ENCODE measurements at regions of chr7 and their contacts with region 1.

Region 1: DNA sequence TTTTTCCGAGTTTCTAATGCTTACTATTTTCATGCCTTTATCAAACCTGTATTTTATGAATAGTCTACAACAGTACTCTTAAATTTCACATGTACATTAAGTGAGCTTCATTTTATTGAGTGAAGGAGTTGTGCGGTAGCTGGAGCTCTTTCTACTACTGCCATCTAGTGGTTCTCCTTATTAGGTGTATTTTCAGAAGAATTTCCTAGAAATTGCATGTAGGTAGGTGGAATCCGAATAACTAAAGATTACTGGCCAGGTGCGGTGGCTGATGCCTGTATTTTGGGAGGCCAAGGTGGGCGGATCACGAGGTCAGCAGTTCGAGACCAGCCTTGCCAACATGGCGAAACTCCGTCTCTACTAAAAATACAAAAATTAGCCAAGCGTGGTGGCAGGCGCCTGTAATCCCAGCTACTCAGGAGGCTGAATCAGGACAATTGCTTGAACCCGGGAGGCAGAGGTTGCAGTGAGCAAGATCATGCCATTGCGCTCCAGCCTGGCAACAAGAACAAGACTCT is 38.3 kb downstream of the LRRC72 start:
- DNase-seq: peak; percentile 8
- ATAC-seq: peak; percentile 80
- H3K4me3 ChIP-seq: no peak overlapping the region
- H3K27ac ChIP-seq: no peak overlapping the region
- H3K4me1 ChIP-seq: no peaks in the 10 kb centered on the region
- H3K27me3 ChIP-seq: no peaks in the 10 kb centered on the region; a peak in 1 of 4 replicates
- CTCF ChIP-seq: peak; percentile 58 to 64 (median 61); a peak in 5 of 6 replicates
- EP300 ChIP-seq: no peak
- POLR2A ChIP-seq: no peak
- RAD21 ChIP-seq: peak; percentile 81

Region 2: DNA sequence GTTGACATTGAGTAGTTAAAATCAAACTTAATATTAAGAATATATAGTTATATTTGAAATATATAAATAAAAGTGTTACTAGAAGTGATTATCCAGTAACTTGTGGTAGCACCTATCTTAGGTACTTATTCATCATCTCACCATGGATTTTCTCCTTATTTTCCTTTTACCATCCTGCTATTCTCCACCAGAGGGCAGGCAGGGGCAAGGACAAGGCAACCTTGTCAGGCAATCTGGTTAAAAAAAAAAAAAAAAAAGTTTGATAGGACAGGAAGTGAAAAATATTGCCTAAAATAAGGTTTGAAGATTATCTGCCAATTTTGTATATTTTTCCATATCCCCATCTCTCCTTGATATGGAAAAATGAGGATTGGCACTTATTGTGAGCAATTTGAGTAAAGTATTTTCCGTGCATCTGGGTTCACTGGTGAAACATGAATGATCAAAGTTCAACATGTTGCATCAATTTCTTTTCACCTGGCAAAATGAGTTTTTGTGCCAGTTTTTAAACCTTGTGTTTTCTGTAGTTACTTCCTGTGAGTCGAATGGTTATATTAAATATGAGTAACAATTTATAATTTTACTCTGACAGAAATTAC is 1259.9 kb before region 1 on chr7:
- CTCF ChIA-PET with region 1: no interaction called
- POLR2A ChIA-PET with region 1: no interaction called
- RAD21 ChIA-PET with region 1: no interaction called
- SMC1A ChIA-PET with region 1: no interaction called
- in situ Hi-C with region 1: loop called (anchors 25 kb)
- intact Hi-C with region 1: no loop called
- DNase-seq: no peak
- ATAC-seq: peak; percentile 68
- H3K4me3 ChIP-seq: no peak overlapping the region
- H3K27ac ChIP-seq: no peak overlapping the region
- H3K4me1 ChIP-seq: no peaks in the 10 kb centered on the region
- H3K27me3 ChIP-seq: no peaks in the 10 kb centered on the region
- CTCF ChIP-seq: peak; percentile 53 to 64 (median 64)
- EP300 ChIP-seq: no peak
- POLR2A ChIP-seq: no peak
- RAD21 ChIP-seq: peak; percentile 59

Region 3: GRCh38 chr7:16078076-16078952 is 486.7 kb before region 1 on chr7:
- CTCF ChIA-PET with region 1: interaction called, 81 read pairs
- POLR2A ChIA-PET with region 1: no interaction called
- RAD21 ChIA-PET with region 1: interaction called, 23 read pairs
- SMC1A ChIA-PET with region 1: interaction called, 22 read pairs
- in situ Hi-C with region 1: loop called (anchors 5 kb)
- intact Hi-C with region 1: loop called (anchors 1 kb)
- DNase-seq: no peak
- ATAC-seq: peak; percentile 75
- H3K4me3 ChIP-seq: no peak overlapping the region
- H3K27ac ChIP-seq: no peak overlapping the region
- H3K4me1 ChIP-seq: no peaks in the 10 kb centered on the region
- H3K27me3 ChIP-seq: no peaks in the 10 kb centered on the region
- CTCF ChIP-seq: peak; percentile 55 to 60 (median 57)
- EP300 ChIP-seq: no peak
- POLR2A ChIP-seq: no peak
- RAD21 ChIP-seq: peak; percentile 65

Region 4: GRCh38 chr7:16431646-16432424 is 133.1 kb before region 1 on chr7:
- CTCF ChIA-PET with region 1: interaction called, 46 read pairs
- POLR2A ChIA-PET with region 1: no interaction called
- RAD21 ChIA-PET with region 1: interaction called, 19 read pairs
- SMC1A ChIA-PET with region 1: interaction called, 12 read pairs
- in situ Hi-C with region 1: no loop called
- intact Hi-C with region 1: loop called (anchors 2 kb)
- DNase-seq: no peak
- ATAC-seq: peak; percentile 74
- H3K4me3 ChIP-seq: no peak overlapping the region
- H3K27ac ChIP-seq: no peak overlapping the region
- H3K4me1 ChIP-seq: no peaks in the 10 kb centered on the region
- H3K27me3 ChIP-seq: no peaks in the 10 kb centered on the region
- CTCF ChIP-seq: peak; percentile 13 to 35 (median 34); a peak in 3 of 6 replicates
- EP300 ChIP-seq: no peak
- POLR2A ChIP-seq: no peak
- RAD21 ChIP-seq: peak; percentile 37; the same call in 1 of the 2 replicates

Region 5: GRCh38 chr7:16479591-16479990 is 85.4 kb before region 1 on chr7:
- CTCF ChIA-PET with region 1: no interaction called
- POLR2A ChIA-PET with region 1: no interaction called
- RAD21 ChIA-PET with region 1: no interaction called
- SMC1A ChIA-PET with region 1: no interaction called
- in situ Hi-C with region 1: no loop called
- intact Hi-C with region 1: no loop called
- DNase-seq: no peak
- ATAC-seq: no peak
- H3K4me3 ChIP-seq: no peak overlapping the region
- H3K27ac ChIP-seq: no peak overlapping the region
- H3K4me1 ChIP-seq: no peaks in the 10 kb centered on the region
- H3K27me3 ChIP-seq: no peaks in the 10 kb centered on the region
- CTCF ChIP-seq: no peak
- EP300 ChIP-seq: no peak
- POLR2A ChIP-seq: no peak
- RAD21 ChIP-seq: no peak

Region 6: GRCh38 chr7:16581286-16581685 is 16.3 kb after region 1 on chr7:
- CTCF ChIA-PET with region 1: interaction called, 11 read pairs
- POLR2A ChIA-PET with region 1: no interaction called
- RAD21 ChIA-PET with region 1: no interaction called
- SMC1A ChIA-PET with region 1: interaction called, 4 read pairs
- in situ Hi-C with region 1: no loop called
- intact Hi-C with region 1: no loop called
- DNase-seq: no peak
- ATAC-seq: no peak
- H3K4me3 ChIP-seq: no peak overlapping the region
- H3K27ac ChIP-seq: no peak overlapping the region
- H3K4me1 ChIP-seq: no peaks in the 10 kb centered on the region
- H3K27me3 ChIP-seq: 0 out of 4 replicates have a peak, but pooled peaks cover 0 to 5% of the 10 kb centered on the region in 2 experiments
- CTCF ChIP-seq: no peak
- EP300 ChIP-seq: no peak
- POLR2A ChIP-seq: no peak
- RAD21 ChIP-seq: no peak

Region 7: GRCh38 chr7:16627236-16627635 is 62.3 kb after region 1 on chr7:
- CTCF ChIA-PET with region 1: no interaction called
- POLR2A ChIA-PET with region 1: no interaction called
- RAD21 ChIA-PET with region 1: no interaction called
- SMC1A ChIA-PET with region 1: no interaction called
- in situ Hi-C with region 1: no loop called
- intact Hi-C with region 1: no loop called
- DNase-seq: no peak
- ATAC-seq: no peak
- H3K4me3 ChIP-seq: no peak overlapping the region
- H3K27ac ChIP-seq: no peak overlapping the region
- H3K4me1 ChIP-seq: no peaks in the 10 kb centered on the region
- H3K27me3 ChIP-seq: no peaks in the 10 kb centered on the region; a peak in 1 of 4 replicates
- CTCF ChIP-seq: no peak
- EP300 ChIP-seq: no peak
- POLR2A ChIP-seq: no peak
- RAD21 ChIP-seq: no peak